Heart left ventricle (tissue), 16 donors: ENCODE measurements at regions of chr1 and their contacts with region 1.

Region 1: DNA sequence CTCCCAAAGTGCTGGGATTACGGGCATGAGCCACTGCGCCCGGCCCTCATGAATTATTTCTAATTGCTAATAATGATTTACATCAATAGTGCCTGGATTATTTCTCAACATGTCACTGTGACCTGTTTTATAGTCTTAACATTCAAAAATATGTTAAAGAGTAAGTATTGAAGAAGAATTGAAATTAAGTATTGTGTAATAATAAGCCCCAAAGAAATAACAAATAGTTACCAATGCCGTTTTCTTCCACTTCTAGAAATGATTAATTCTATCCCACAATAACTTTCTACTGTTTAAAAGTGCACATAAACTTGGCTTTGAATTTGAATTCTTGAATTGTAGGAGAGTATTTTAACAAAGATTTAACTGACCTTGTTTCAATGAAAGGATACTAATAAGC is 19.5 kb downstream of the SPATA17 start:
- DNase-seq: no peak
- ATAC-seq: no peak
- H3K4me3 ChIP-seq: no peak overlapping the region
- H3K27ac ChIP-seq: no peak overlapping the region
- H3K4me1 ChIP-seq: no peaks in the 10 kb centered on the region
- H3K27me3 ChIP-seq: no peaks in the 10 kb centered on the region
- CTCF ChIP-seq: no peak
- POLR2A ChIP-seq: no peak

Region 2: GRCh38 chr1:217393896-217394295 is 256.8 kb before region 1 on chr1:
- intact Hi-C with region 1: loop called in 1 of 10 experiments (anchors 10 kb)
- DNase-seq: no peak
- ATAC-seq: peak in 1 of 4 donors; percentile 48
- H3K4me3 ChIP-seq: no peak overlapping the region
- H3K27ac ChIP-seq: no peak overlapping the region
- H3K4me1 ChIP-seq: no peaks in the 10 kb centered on the region
- H3K27me3 ChIP-seq: no peaks in the 10 kb centered on the region
- CTCF ChIP-seq: peak in 6 of 12 donors; percentile 14 to 35 (median 26)
- POLR2A ChIP-seq: no peak